ENCODE measurements at regions of chr12 and their contacts with region 1.

Region 1: DNA sequence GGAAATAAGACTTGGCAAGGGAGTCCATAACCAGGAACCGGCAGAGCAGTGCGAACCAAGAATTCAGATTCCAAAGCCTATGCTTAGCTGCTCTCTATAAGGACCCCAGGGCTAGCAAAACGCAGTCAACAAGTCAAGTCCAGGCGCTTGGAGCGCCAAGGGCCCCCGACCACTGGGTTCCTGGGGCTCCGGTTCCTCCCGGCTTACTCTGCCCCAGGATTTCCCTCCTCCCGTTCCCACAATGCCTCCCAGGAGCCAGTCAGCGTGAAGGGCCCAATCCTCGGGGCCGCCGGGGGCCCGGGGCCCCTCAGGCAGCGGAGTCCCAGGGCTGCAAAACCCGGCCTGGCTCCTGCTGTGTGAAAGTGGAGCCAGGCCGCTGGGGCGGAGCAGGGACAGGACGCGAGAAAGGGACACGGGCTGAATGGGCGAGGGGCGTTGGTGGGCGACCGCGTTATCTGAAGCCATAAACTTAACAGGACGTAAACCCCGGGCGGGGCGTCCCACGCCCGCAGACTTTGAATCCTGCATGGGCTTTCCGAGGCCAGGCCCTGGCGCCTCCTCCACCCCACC is 1.5 kb downstream of the KRT8 start:
- DNase-seq: peak; percentile 50 to 69
- ATAC-seq: peak; percentile 26 to 39; a peak in 5 of 6 replicates
- H3K4me3 ChIP-seq: peak overlapping the region; percentile 87
- H3K27ac ChIP-seq: peak overlapping the region; percentile 91 to 99
- H3K4me1 ChIP-seq: peaks cover 72% of the 10 kb centered on the region
- CTCF ChIP-seq: no peak
- EP300 ChIP-seq: no peak
- POLR2A ChIP-seq: peak; percentile 9; the same call in 1 of the 2 replicates
- RAD21 ChIP-seq: 0 out of 5 replicates have a peak, but pooled peaks of 1 of the 2 experiments have one; percentile 2

Region 2: GRCh38 chr12:52865090-52865944 is 38.1 kb before region 1 on chr12:
- CTCF ChIA-PET with region 1: no interaction called
- POLR2A ChIA-PET with region 1: no interaction called
- DNase-seq: peak; percentile 92 to 94
- ATAC-seq: peak; percentile 79 to 86
- H3K4me3 ChIP-seq: no peak overlapping the region
- H3K27ac ChIP-seq: peak overlapping the region; percentile 61 to 73
- H3K4me1 ChIP-seq: peaks cover 41% of the 10 kb centered on the region
- CTCF ChIP-seq: peak; percentile 77
- EP300 ChIP-seq: no peak
- POLR2A ChIP-seq: no peak
- RAD21 ChIP-seq: peak; percentile 91 to 96

Region 3: GRCh38 chr12:52918351-52918750 is 15.0 kb after region 1 on chr12:
- CTCF ChIA-PET with region 1: interaction called, 126 read pairs
- POLR2A ChIA-PET with region 1: interaction called, 205 read pairs
- DNase-seq: no peak
- ATAC-seq: peak; percentile 11 to 44; a peak in 2 of 6 replicates
- H3K4me3 ChIP-seq: no peak overlapping the region
- H3K27ac ChIP-seq: peak overlapping the region in 1 of 2 experiments; percentile 48; a peak in 3 of 6 replicates
- H3K4me1 ChIP-seq: peaks cover 25% of the 10 kb centered on the region
- CTCF ChIP-seq: no peak
- EP300 ChIP-seq: no peak
- POLR2A ChIP-seq: no peak
- RAD21 ChIP-seq: no peak

Region 4: GRCh38 chr12:52942066-52942900 is 38.9 kb after region 1 on chr12:
- CTCF ChIA-PET with region 1: interaction called, 112 read pairs
- POLR2A ChIA-PET with region 1: interaction called, 208 read pairs
- DNase-seq: no peak
- ATAC-seq: no peak
- H3K4me3 ChIP-seq: no peak overlapping the region
- H3K27ac ChIP-seq: peak overlapping the region; percentile 96 to 97
- H3K4me1 ChIP-seq: peaks cover 50% of the 10 kb centered on the region
- CTCF ChIP-seq: no peak
- EP300 ChIP-seq: no peak
- POLR2A ChIP-seq: no peak
- RAD21 ChIP-seq: no peak

Region 5: GRCh38 chr12:52949413-52950331 is 46.3 kb after region 1 on chr12:
- CTCF ChIA-PET with region 1: interaction called, 112 read pairs
- POLR2A ChIA-PET with region 1: interaction called, 208 read pairs
- DNase-seq: peak; percentile 87 to 95
- ATAC-seq: peak; percentile 75 to 82
- H3K4me3 ChIP-seq: peak overlapping the region; percentile 91
- H3K27ac ChIP-seq: peak overlapping the region; percentile 96 to 97
- H3K4me1 ChIP-seq: peaks cover 66% of the 10 kb centered on the region
- CTCF ChIP-seq: no peak
- EP300 ChIP-seq: 0 out of 5 replicates have a peak, but pooled peaks of 1 of the 2 experiments have one; percentile 16
- POLR2A ChIP-seq: peak; percentile 49
- RAD21 ChIP-seq: no peak

Region 6: DNA sequence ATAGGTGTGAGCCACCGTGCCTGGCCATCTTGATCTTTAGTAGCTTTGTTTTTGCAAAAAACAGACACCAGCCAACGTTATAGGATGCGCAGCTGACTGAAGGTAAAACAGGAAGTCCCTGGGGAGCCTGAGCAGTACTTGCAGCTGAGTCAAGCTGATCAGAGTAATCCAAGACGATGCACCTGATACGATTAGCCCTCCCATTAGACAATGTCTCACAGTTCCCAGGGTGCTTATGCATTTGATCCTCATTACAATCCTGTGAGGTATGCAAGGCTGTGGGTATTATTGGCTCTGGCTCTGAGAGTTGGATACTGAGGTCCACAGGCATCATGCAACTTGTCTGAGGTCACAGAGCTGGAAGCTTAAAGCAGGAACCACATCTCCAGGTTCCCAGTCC is 53.6 kb after region 1 on chr12:
- CTCF ChIA-PET with region 1: interaction called, 112 read pairs
- POLR2A ChIA-PET with region 1: interaction called, 208 read pairs
- DNase-seq: peak in 1 of 2 experiments; percentile 69
- ATAC-seq: peak; percentile 25 to 43; a peak in 3 of 6 replicates
- H3K4me3 ChIP-seq: no peak overlapping the region
- H3K27ac ChIP-seq: peak overlapping the region; percentile 18 to 61; a peak in 3 of 6 replicates
- H3K4me1 ChIP-seq: peaks cover 21% of the 10 kb centered on the region
- CTCF ChIP-seq: no peak
- EP300 ChIP-seq: no peak
- POLR2A ChIP-seq: no peak
- RAD21 ChIP-seq: no peak

Region 7: DNA sequence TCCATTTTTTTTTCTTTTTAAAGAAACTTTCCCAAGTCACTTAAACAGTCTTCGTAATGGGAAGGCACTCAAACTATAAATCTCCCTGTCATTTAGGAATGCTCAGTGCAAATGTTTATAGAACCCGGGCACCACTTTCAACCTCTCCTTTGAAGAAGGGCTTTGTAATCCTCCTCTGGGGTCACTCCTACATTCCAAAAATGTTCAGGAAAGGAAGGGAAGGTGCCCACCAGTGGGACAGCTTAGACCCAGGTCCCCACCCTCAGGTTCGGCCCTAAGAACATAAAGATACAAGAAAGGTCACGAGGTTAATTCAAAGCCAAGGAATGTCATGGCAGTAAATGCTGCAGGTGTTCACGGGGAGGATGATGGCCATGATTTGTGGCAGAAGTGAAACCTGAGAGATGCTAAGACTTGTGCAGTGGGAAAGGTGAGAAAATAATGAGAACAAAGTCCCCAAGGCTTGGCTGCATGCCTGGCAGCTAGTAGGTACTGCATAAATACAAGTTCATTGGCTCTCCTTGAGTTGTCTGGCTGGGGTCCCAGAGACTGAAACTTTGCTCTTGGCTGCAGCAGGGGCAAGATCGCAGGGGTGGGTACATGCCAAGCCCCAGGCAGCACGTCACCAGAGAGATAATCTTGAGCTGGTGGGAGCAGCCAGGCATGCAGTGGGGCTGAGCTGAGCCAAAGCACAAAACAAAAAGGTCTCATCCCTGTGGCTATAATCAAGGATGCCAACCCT is 66.6 kb after region 1 on chr12:
- CTCF ChIA-PET with region 1: interaction called, 34 read pairs
- POLR2A ChIA-PET with region 1: interaction called, 110 read pairs
- DNase-seq: peak in 1 of 2 experiments; percentile 96
- ATAC-seq: peak; percentile 39 to 67
- H3K4me3 ChIP-seq: 0 out of 3 replicates have a peak overlapping the region, but pooled peaks have one; percentile 3
- H3K27ac ChIP-seq: peak overlapping the region; percentile 90 to 91
- H3K4me1 ChIP-seq: peaks cover 72% of the 10 kb centered on the region
- CTCF ChIP-seq: no peak
- EP300 ChIP-seq: peak; percentile 72 to 91; a peak in 4 of 5 replicates
- POLR2A ChIP-seq: no peak
- RAD21 ChIP-seq: 0 out of 5 replicates have a peak, but pooled peaks of 1 of the 2 experiments have one; percentile 1

Region 8: DNA sequence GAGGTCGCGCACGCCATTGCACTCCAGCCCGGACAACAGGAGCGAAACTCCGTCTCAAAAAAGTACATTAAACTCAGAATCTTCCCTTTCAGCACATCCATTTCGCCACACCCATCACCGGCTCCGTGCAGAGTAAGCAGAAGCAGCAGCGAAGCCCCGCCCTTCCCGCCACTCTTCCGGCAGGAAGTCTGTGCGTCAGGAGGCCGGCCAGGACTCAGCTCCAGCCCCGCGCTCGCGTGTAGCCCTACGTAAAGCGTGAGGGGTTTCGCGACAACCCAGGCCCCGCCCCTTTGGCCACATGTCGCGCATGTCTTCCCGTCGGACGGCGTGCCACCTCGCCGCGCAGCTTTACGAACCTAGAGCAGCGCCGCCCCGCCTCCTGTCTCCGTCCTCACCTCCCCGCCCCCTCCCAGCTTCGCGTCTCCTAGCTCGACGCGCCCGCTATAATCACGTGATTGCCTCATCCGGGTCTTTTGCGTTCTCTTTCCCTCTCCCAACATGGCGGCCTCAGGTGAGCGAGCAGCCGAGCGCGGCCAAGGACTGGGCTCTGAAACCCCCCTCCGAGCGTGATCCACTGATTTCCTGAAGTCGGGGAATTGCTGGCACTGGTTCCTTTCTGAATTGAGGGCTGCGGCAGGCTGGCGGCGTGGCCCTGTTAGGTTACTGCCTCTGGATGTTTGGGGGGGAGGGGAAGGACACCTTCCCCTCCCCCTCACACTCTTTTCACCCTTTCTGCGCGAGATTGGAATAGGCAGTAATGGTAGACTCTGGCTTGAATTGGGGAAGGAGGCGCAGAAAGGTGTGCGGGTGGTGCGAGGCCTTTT is 102.8 kb after region 1 on chr12 and contains the start of gene EIF4B:
- CTCF ChIA-PET with region 1: interaction called, 5 read pairs
- POLR2A ChIA-PET with region 1: interaction called, 13 read pairs
- DNase-seq: peak; percentile 96 to 100
- ATAC-seq: peak; percentile 94 to 95
- H3K4me3 ChIP-seq: peak within 1 kb of the TSS; percentile 88
- H3K27ac ChIP-seq: peak within 1 kb of the TSS; percentile 95 to 99
- H3K4me1 ChIP-seq: peaks cover 47% of the 10 kb centered on the region
- CTCF ChIP-seq: no peak
- EP300 ChIP-seq: peak in 1 of 2 experiments; percentile 3; a peak in 1 of 5 replicates
- POLR2A ChIP-seq: peak; percentile 63
- RAD21 ChIP-seq: no peak
- polyA plus RNA-seq, gene EIF4B: 577 and 650 TPM in 2 replicates

Measured in A549 (cell line).